Cardiac septum (tissue), 1 donor: ENCODE measurements at regions of chr2 and their contacts with region 1.

Region 1: GRCh38 chr2:102020596-102021181 is 28.9 kb downstream of the IL1R2 start:
- DNase-seq: peak; percentile 92

Region 2: DNA sequence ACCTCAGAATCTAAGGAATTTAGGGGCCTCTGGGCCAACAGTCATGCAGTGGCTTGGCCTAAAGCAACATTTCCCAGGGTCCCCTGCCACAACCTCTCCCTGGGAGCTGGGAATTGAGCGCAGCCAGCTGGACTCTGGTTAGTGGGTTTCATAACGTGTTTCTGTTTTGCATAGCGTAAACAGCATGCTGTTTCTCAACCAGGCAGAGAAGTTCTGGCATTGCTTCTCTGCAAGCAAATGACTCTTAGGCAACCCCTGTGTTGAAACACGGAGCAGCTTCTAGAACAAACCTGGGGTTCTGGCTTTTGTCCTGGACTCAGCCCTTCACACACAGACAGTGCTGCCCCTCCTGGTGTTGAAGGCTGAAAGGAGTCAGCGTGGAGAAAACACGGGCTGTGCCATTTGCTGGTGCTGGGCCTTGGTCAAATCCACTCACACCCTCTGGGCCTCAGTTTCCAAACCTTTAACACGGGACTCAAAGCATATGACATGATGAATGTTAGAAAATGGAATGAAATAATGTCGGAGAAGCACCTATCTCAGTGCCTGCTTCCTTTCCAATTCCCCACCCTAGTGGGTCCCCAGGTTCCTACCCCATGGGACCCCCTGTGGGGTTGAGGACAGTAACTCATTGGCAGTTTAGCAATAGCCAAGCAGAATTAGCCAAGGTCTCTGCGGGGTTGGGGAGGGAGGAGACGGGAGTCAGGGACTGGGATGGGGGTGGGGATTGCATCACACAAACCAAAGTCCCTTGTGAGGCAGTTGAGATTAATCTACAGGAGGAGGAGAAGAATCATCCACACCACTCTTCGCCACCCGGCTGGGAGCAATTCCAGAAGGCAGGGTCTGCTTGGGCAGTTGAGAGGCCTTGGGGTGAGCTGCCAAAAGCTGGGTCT is 59.1 kb before region 1 on chr2:
- intact Hi-C with region 1: no loop called
- DNase-seq: peak; percentile 90

Region 3: DNA sequence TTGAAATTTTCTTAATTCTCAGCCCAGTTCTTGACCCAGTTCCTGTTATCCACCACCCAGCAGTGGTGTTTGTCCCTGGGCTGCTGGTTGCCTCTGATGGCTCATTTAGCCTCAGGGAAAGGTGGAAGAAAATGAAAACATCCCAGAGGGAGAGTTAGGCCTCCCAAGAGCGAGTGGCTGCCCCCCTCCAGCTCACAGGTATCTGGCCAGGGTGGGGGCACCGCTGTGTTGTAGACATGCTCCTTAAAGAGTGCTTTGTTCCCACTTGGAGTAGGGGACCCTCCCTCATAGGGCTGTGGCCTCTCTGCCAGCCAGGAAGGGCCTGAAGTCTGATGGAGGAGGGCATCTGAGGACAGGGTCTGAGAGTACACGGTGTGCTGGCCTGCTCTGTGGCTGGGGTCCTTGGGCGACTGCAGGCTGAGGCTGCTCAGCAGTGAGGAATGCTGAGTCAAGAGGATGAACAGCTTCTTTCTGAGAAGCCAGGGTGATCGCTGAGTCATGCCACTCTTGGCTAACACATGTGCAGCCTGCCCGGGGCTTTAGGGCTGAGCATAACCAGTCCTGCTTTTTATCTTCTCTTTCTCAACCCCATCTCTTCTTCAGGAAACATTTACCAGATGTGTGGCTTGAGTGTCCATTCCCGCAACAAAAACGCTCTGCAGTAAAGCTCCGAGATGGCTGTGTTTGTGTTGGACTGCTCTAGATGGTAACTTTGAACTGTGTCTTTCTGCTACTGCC is 43.4 kb after region 1 on chr2:
- intact Hi-C with region 1: loop called (anchors 5 kb)
- DNase-seq: peak; percentile 92

Region 4: DNA sequence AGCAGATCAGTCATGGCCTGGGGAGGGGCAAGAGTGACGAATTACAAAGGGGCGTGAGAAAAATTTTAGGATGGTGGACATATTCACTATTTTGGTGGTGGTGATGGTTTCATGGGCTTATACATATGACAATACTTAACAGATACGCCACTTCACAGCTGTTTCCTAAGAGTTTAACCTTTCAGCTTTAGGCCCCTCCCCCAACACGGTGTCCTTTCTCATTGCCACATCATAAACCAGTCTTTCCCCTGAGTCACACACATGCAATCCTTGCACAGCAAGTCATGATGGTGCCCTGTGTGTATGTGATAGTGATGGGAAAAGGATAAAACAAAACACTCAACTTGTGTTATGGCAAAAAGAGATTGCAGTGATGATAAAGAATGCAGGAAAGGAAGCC is 74.2 kb after region 1 on chr2:
- intact Hi-C with region 1: no loop called
- DNase-seq: no peak

Region 5: DNA sequence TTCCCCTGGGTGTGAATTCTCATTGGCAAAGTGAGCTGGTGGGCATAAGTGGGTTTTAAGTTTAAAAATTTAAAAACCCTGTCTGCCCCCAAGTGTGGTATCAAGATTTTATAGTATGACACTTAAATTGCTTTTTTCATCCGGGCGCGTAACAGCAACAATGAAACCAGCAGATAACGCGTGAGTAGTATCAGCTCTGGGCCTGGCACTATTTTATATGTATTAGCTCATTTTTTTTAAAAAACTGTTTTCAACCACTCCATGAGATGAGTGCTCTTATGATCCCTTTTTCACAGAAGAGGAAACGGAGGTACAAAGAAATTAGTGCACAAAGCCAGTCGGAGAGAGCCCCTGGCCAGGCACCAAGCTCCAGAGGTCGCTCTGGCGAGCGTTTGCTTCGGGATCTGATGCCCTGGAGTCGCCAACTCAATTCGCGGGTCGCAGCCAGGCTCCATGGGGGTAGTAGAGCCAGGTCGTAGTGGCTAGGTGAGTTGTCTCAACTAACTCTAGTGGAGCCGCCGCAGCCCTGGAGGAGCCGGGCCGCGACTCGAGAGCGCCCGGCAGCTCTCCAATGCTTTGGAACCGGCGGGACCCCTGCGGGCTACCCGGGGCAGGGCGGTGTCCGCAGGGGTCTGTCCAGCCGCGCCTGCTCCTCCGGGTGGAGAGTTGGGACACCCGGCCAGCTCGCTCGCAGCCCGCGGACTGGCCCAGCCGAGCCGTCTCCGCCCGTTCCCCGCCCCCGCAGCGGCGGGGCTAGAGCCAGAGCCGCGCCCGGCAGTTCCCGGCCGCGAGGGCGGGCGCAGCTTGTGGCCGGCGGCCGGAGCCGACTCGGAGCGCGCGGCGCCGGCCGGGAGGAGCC is 121.5 kb after region 1 on chr2 and contains the start of gene IL1R1:
- intact Hi-C with region 1: loop called (anchors 5 kb)
- DNase-seq: peak; percentile 93
- total RNA-seq, gene IL1R1: 27.7 TPM

Region 6: GRCh38 chr2:102166189-102166845 is 145.6 kb after region 1 on chr2:
- intact Hi-C with region 1: loop called (anchors 1 kb)
- DNase-seq: no peak

Region 7: DNA sequence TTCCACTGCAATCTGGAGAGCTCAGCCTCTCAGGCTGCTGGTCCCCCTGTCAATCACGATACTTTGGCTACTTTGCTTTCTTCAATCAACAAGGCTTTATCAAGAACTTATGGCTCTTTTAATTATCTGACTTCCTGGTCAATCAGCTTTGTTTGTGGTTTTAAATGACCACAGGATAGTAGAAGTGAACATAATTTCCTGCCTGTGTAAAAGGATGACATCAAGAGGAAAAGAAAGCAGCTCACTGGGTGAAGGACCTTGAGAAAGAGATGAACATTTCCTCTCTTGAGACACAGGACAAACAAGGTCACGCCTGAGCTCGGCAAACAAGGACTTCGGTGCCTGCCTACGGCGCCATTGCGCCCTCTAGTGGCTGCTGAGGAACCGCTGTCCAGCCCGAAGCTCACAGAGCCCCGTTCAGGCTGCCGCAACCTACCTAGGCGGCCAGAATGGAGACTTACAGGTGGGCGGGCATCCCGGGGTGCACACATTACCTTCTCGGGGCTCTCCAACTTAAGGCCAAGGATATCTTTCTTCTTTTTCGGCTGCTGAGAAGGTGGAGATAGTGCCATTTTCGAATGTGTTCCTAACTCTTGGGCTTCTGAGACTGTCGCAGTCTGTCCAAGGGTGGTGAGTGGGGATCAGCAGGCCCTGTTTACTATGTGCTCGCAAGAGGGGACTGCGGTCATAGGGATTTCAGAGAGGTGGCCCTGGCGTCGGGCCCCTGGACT is 220.1 kb after region 1 on chr2:
- intact Hi-C with region 1: loop called (anchors 2 kb)
- DNase-seq: peak; percentile 97